ENCODE measurements at regions of chr3 and their contacts with region 1.

Region 1: DNA sequence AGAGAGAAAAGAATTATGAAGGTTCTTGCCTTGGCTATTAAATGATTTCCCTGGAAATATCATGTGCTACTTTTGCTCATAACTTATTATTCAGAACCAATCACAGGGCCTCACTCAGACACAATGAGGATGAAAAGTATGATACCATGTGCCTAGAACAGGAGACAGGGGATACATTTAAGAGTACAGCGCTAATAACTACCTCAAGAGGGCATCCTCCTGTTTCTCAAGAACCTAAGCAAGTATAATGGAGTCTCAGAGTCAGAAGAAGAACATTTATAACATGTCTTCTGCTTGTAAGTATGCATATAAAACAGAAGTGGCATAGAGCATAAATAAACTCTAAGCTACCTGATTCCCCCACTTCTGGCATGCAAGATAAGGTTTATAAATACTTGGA is 125.4 kb upstream of the MME start:
- DNase-seq: peak; percentile 76
- ATAC-seq: 0 out of 2 replicates have a peak, but pooled peaks have one; percentile 48
- H3K4me3 ChIP-seq: no peak overlapping the region
- H3K27ac ChIP-seq: no peak overlapping the region
- H3K4me1 ChIP-seq: no peaks in the 10 kb centered on the region
- H3K27me3 ChIP-seq: no peaks in the 10 kb centered on the region
- CTCF ChIP-seq: peak; percentile 65
- POLR2A ChIP-seq: no peak
- RAD21 ChIP-seq: peak; percentile 66

Region 2: DNA sequence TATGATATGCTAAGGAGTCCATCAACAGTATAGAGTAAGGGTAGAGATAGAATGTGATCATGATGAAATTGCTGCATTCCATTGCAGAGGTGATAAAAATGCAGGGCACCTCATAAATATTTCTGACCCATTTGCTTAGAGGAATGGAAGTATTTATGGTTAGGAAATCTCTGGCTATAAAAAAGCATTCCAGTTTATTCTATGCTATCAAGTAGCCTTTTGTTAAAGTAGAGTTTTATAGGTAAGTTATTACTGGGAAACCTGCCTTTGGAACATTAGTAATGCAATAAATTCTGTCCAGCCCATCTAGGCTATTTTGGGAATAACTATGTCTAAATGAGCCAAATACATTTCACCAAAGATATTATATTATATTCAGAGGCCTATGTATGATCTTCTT is 358.5 kb after region 1 on chr3:
- CTCF ChIA-PET with region 1: interaction called, 4 read pairs
- POLR2A ChIA-PET with region 1: no interaction called
- dilution Hi-C with region 1: no loop called
- in situ Hi-C with region 1: loop called (anchors 10 kb)
- intact Hi-C with region 1: no loop called
- DNase-seq: no peak
- ATAC-seq: no peak; the same call in 1 of the 2 replicates
- H3K4me3 ChIP-seq: no peak overlapping the region
- H3K27ac ChIP-seq: no peak overlapping the region
- H3K4me1 ChIP-seq: peaks cover 3% of the 10 kb centered on the region; the same call in 1 of the 2 replicates
- H3K27me3 ChIP-seq: no peaks in the 10 kb centered on the region
- CTCF ChIP-seq: no peak
- POLR2A ChIP-seq: no peak
- RAD21 ChIP-seq: no peak

Measured in IMR-90 (cell line).